Dendritic cell treated with granulocyte-macrophage colony-stimulating factor and Interleukin-4, amounts not matched to agents 40 ng/mL and 50 ng/mL, for 4 days (primary cell): ENCODE measurements at regions of chr18 and their contacts with region 1.

Region 1: DNA sequence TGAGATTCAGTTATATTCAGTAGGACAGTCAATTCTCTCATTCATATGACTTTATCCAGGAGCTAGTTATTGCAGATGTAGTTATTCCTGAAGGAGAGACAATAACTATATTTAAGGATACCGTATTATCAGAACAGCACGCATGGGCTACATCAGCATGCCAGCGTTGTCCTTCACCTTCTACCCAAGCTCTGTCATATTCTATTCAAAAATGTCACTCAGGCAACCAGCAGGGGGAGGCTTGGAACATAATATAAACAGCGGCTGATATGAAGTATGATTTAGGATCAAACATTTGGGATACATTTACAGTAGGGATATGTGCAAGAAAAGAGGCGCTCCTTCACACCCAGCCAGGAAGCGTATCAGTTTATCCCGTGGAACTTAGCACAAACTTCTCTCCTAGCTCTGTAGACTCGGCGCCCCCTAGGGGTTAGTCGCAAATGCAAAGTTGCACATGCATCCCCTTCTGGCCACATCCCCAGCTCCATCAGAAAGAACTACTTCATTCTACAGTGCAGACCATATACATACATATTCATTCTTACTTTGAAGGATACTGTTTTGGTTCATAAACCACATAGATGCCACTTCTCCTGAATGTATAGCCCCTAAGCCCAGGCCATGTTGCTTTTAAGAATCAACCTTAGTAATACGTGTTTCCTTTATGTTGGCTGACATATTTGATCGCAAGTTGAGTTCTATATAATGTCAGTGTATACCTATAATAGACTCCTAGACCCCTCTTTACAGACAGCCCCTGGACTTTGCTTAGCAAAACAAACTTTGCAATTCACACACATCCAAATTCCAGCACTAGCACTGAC is 759.4 kb downstream of the ADCYAP1 start:
- H3K4me3 Mint-ChIP-seq: no peak overlapping the region
- H3K27ac Mint-ChIP-seq: no peak overlapping the region
- H3K4me1 Mint-ChIP-seq: no peaks in the 10 kb centered on the region
- H3K27me3 Mint-ChIP-seq: no peaks in the 10 kb centered on the region

Region 2: DNA sequence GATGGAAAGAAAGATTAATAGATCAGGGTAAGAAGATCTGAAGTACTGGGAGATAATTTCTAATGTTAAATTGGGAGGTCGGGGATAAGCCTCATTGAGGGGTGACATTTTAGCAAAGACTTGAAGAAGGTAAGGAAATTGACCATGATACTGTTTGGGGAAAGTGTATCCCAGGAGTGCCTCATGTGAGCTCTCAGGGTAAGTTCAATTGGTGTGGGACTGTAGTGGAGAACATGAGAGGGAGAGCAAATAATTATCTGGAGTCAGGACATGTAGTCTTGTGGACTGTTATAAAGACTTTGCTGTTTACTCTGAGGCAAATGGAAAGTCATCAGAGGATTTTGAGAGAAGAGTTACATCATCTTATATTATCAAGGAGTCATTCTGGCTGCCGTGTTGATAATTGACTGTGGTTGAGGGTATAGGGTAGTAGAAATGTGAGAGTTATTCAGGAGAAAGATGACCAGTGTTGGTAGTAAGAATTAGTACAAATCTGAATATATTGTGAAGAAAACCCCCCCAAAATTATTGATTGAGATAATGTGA is 135.1 kb before region 1 on chr18:
- intact Hi-C with region 1: no loop called
- H3K4me3 Mint-ChIP-seq: no peak overlapping the region
- H3K27ac Mint-ChIP-seq: no peak overlapping the region
- H3K4me1 Mint-ChIP-seq: no peaks in the 10 kb centered on the region
- H3K27me3 Mint-ChIP-seq: no peaks in the 10 kb centered on the region

Region 3: DNA sequence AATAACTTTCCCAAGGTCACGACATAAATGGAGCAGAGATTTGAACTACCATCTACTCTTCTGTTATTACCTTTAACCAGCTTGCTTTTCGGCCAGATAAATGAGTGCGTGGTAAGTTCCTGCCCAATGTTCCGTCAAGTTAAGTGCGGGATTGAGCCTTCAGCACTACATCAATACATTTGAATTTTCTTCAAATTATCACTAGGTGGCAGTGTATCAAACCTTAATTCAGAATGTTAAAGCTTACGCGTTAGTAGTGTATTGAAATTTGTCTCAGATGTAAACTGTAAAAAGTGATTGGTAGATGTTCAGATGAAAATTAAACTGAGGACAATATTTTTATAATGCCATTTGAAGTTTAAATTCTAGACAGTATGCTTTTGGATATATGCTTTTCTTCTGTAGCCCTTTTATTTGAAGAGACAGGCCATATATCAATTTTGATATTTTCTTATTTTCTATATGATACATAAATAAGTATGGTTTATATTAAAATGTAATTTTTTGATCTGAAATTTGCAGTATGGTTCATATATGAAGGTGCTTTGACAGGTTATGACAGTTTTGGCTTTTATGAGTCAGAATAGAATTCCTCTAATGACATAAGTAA is 78.1 kb before region 1 on chr18:
- intact Hi-C with region 1: loop called (anchors 1 kb)
- H3K4me3 Mint-ChIP-seq: no peak overlapping the region
- H3K27ac Mint-ChIP-seq: no peak overlapping the region
- H3K4me1 Mint-ChIP-seq: no peaks in the 10 kb centered on the region
- H3K27me3 Mint-ChIP-seq: peaks cover 4% of the 10 kb centered on the region